ENCODE measurements at regions of chr5 and their contacts with region 1.

Region 1: GRCh38 chr5:149561848-149562247 is 10.6 kb upstream of the CSNK1A1 start:
- DNase-seq: no peak
- H3K4me3 ChIP-seq: no peak overlapping the region
- H3K27ac ChIP-seq: peak overlapping the region; percentile 79 to 87 (median 85)
- H3K4me1 ChIP-seq: peaks cover 12 to 31% (median 20%) of the 10 kb centered on the region in 4 donors
- H3K27me3 ChIP-seq: no peaks in the 10 kb centered on the region
- CTCF ChIP-seq: no peak
- EP300 ChIP-seq: no peak
- POLR2A ChIP-seq: no peak

Region 2: GRCh38 chr5:149238583-149238982 is 323.3 kb before region 1 on chr5:
- in situ Hi-C with region 1: no loop called
- intact Hi-C with region 1: no loop called
- DNase-seq: no peak
- H3K4me3 ChIP-seq: no peak overlapping the region
- H3K27ac ChIP-seq: no peak overlapping the region
- H3K4me1 ChIP-seq: no peaks in the 10 kb centered on the region
- H3K27me3 ChIP-seq: no peaks in the 10 kb centered on the region
- CTCF ChIP-seq: no peak
- EP300 ChIP-seq: no peak
- POLR2A ChIP-seq: no peak

Region 3: GRCh38 chr5:149442563-149443182 is 119.2 kb before region 1 on chr5:
- in situ Hi-C with region 1: loop called in 3 of 4 experiments (anchors 5 to 10 kb)
- intact Hi-C with region 1: loop called (anchors 2 kb)
- DNase-seq: peak; percentile 90
- H3K4me3 ChIP-seq: no peak overlapping the region
- H3K27ac ChIP-seq: peak overlapping the region; percentile 69 to 91 (median 72)
- H3K4me1 ChIP-seq: peaks cover 6 to 34% (median 28%) of the 10 kb centered on the region in 4 donors
- H3K27me3 ChIP-seq: no peaks in the 10 kb centered on the region
- CTCF ChIP-seq: peak; percentile 82 to 97 (median 91)
- EP300 ChIP-seq: no peak
- POLR2A ChIP-seq: no peak

Measured in transverse colon (tissue), 4 donors.